ENCODE measurements at regions of chr7 and their contacts with region 1.

Region 1: GRCh38 chr7:726084-726853 is at the start of gene DNAAF5:
- DNase-seq: peak; percentile 88 to 89
- H3K4me3 ChIP-seq: peak within 1 kb of the TSS; percentile 87
- H3K4me3 Mint-ChIP-seq: peak within 1 kb of the TSS; percentile 98
- H3K27ac Mint-ChIP-seq: peak within 1 kb of the TSS; percentile 97
- H3K4me1 ChIP-seq: peaks cover 14% of the 10 kb centered on the region
- H3K4me1 Mint-ChIP-seq: peaks cover 6% of the 10 kb centered on the region
- H3K27me3 ChIP-seq: no peaks in the 10 kb centered on the region
- H3K27me3 Mint-ChIP-seq: no peaks in the 10 kb centered on the region
- CTCF ChIP-seq: peak in 1 of 2 experiments; percentile 2
- total RNA-seq, gene DNAAF5: 51.4 and 53.4 TPM in 2 replicates

Region 2: DNA sequence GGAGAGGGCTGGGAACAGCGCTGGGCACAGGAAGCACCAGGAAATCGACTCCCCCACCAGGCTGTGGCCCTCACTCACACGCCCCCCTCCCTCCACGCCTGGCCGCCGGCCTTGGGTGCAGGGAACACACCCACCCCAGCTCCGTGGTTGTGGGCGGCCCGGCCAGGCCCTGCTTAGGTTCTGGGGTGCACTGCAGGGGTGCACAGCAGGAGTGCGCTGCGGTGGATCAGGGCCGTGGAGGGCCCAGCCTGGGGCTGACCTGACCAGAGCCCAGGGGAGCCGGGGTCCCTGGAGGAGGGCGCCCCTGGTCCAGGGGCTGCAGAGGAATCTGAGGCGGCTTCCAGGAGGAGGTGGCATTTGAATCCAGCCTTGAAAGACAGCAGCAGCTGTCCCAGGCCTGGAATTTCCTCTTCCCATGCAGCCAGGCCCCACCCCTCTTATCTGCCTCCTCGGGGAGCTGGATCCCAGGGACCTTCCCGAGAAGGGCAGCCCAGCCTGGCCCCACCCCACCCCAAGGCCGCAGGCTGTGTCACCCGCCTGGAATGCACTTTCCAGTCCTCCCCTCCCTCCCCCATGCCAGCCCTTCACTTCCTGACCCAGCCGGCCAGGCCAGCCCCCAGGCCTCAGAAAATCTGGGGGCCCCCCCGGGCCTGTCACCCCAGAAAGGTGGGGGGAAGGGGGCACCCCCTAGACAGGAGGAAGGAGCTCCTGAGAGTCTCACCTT is 188.2 kb before region 1 on chr7:
- CTCF ChIA-PET with region 1: no interaction called
- POLR2A ChIA-PET with region 1: no interaction called
- intact Hi-C with region 1: loop called (anchors 2 kb)
- DNase-seq: peak; percentile 95 to 98
- H3K4me3 ChIP-seq: no peak overlapping the region; the same call in 1 of the 2 replicates
- H3K4me3 Mint-ChIP-seq: peak overlapping the region; percentile 68
- H3K27ac Mint-ChIP-seq: peak overlapping the region; percentile 97
- H3K4me1 ChIP-seq: peaks cover 47% of the 10 kb centered on the region
- H3K4me1 Mint-ChIP-seq: peaks cover 28% of the 10 kb centered on the region
- H3K27me3 ChIP-seq: no peaks in the 10 kb centered on the region
- H3K27me3 Mint-ChIP-seq: no peaks in the 10 kb centered on the region
- CTCF ChIP-seq: no peak

Region 3: GRCh38 chr7:691368-692040 is 34.8 kb before region 1 on chr7:
- CTCF ChIA-PET with region 1: no interaction called
- POLR2A ChIA-PET with region 1: no interaction called
- intact Hi-C with region 1: no loop called
- DNase-seq: peak in 1 of 2 experiments; percentile 30
- H3K4me3 ChIP-seq: no peak overlapping the region
- H3K4me3 Mint-ChIP-seq: no peak overlapping the region
- H3K27ac Mint-ChIP-seq: no peak overlapping the region
- H3K4me1 ChIP-seq: no peaks in the 10 kb centered on the region
- H3K4me1 Mint-ChIP-seq: no peaks in the 10 kb centered on the region
- H3K27me3 ChIP-seq: no peaks in the 10 kb centered on the region
- H3K27me3 Mint-ChIP-seq: no peaks in the 10 kb centered on the region
- CTCF ChIP-seq: no peak

Region 4: GRCh38 chr7:805261-805660 is 79.0 kb after region 1 on chr7:
- CTCF ChIA-PET with region 1: no interaction called
- POLR2A ChIA-PET with region 1: no interaction called
- intact Hi-C with region 1: no loop called
- DNase-seq: peak in 1 of 2 experiments; percentile 69
- H3K4me3 ChIP-seq: no peak overlapping the region
- H3K4me3 Mint-ChIP-seq: no peak overlapping the region
- H3K27ac Mint-ChIP-seq: peak overlapping the region; percentile 32
- H3K4me1 ChIP-seq: peaks cover 7% of the 10 kb centered on the region; the same call in 1 of the 2 replicates
- H3K4me1 Mint-ChIP-seq: peaks cover 7% of the 10 kb centered on the region
- H3K27me3 ChIP-seq: no peaks in the 10 kb centered on the region
- H3K27me3 Mint-ChIP-seq: no peaks in the 10 kb centered on the region
- CTCF ChIP-seq: no peak

Region 5: GRCh38 chr7:945556-946255 is 219.4 kb after region 1 on chr7:
- CTCF ChIA-PET with region 1: no interaction called
- POLR2A ChIA-PET with region 1: no interaction called
- intact Hi-C with region 1: no loop called
- DNase-seq: peak; percentile 99
- H3K4me3 ChIP-seq: peak overlapping the region; percentile 44
- H3K4me3 Mint-ChIP-seq: peak overlapping the region; percentile 54
- H3K27ac Mint-ChIP-seq: peak overlapping the region; percentile 82
- H3K4me1 ChIP-seq: peaks cover 33% of the 10 kb centered on the region
- H3K4me1 Mint-ChIP-seq: no peaks in the 10 kb centered on the region
- H3K27me3 ChIP-seq: no peaks in the 10 kb centered on the region
- H3K27me3 Mint-ChIP-seq: no peaks in the 10 kb centered on the region
- CTCF ChIP-seq: no peak

Measured in Caco-2 (cell line).